ENCODE measurements at regions of chr4 and their contacts with region 1.

Region 1: GRCh38 chr4:45971108-45971507 is 152.7 kb downstream of the GABRG1 start:
- DNase-seq: peak; percentile 82
- H3K4me3 Mint-ChIP-seq: no peak overlapping the region
- H3K27ac Mint-ChIP-seq: peak overlapping the region; percentile 37
- H3K4me1 Mint-ChIP-seq: no peaks in the 10 kb centered on the region
- H3K27me3 Mint-ChIP-seq: no peaks in the 10 kb centered on the region
- CTCF ChIP-seq: peak; percentile 37

Region 2: GRCh38 chr4:44927399-44928380 is 1043.4 kb before region 1 on chr4:
- CTCF ChIA-PET with region 1: interaction called, 12 read pairs
- POLR2A ChIA-PET with region 1: no interaction called
- intact Hi-C with region 1: loop called (anchors 1 kb)
- DNase-seq: peak; percentile 66
- H3K4me3 Mint-ChIP-seq: no peak overlapping the region
- H3K27ac Mint-ChIP-seq: no peak overlapping the region
- H3K4me1 Mint-ChIP-seq: no peaks in the 10 kb centered on the region
- H3K27me3 Mint-ChIP-seq: no peaks in the 10 kb centered on the region
- CTCF ChIP-seq: peak; percentile 60

Region 3: GRCh38 chr4:45453258-45453853 is 517.8 kb before region 1 on chr4:
- CTCF ChIA-PET with region 1: interaction called, 17 read pairs
- POLR2A ChIA-PET with region 1: no interaction called
- intact Hi-C with region 1: loop called (anchors 1 kb)
- DNase-seq: peak; percentile 72
- H3K4me3 Mint-ChIP-seq: no peak overlapping the region
- H3K27ac Mint-ChIP-seq: no peak overlapping the region
- H3K4me1 Mint-ChIP-seq: no peaks in the 10 kb centered on the region
- H3K27me3 Mint-ChIP-seq: no peaks in the 10 kb centered on the region
- CTCF ChIP-seq: peak; percentile 59

Region 4: DNA sequence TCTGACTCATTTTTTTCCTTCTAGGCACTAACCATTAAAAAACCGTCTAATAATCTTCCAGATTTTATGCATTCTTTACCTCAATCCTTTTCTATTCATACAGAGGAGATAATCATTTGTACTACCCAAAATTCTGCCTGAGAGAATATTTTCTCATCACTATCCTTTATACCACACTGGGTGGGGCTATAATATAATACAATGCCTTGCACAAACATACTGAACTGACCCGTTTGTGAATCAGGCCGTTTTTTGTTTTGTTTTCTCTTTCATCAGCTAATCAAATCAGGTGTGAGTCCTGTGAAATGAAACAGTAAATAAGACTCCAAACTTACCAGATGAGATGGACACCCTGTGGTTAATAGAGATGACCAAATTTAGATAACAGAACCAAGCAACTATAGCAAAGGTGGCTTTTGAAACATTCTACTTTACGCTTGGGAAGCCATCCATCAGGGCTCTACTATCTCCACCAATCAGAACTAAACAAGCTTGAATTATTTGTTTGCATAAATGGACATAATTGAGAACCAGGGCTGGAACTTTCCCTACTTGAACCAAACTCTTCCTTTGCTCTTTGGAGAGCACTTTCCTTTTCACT is 420.2 kb before region 1 on chr4:
- CTCF ChIA-PET with region 1: interaction called, 13 read pairs
- POLR2A ChIA-PET with region 1: interaction called, 4 read pairs
- intact Hi-C with region 1: loop called (anchors 1 kb)
- DNase-seq: peak; percentile 32
- H3K4me3 Mint-ChIP-seq: no peak overlapping the region
- H3K27ac Mint-ChIP-seq: peak overlapping the region; percentile 20
- H3K4me1 Mint-ChIP-seq: peaks cover 4% of the 10 kb centered on the region
- H3K27me3 Mint-ChIP-seq: no peaks in the 10 kb centered on the region
- CTCF ChIP-seq: peak; percentile 32

Region 5: GRCh38 chr4:45693746-45694145 is 277.4 kb before region 1 on chr4:
- CTCF ChIA-PET with region 1: interaction called, 6 read pairs
- POLR2A ChIA-PET with region 1: no interaction called
- intact Hi-C with region 1: loop called (anchors 2 kb)
- DNase-seq: peak; percentile 76
- H3K4me3 Mint-ChIP-seq: peak overlapping the region; percentile 26
- H3K27ac Mint-ChIP-seq: peak overlapping the region; percentile 86
- H3K4me1 Mint-ChIP-seq: peaks cover 7% of the 10 kb centered on the region
- H3K27me3 Mint-ChIP-seq: no peaks in the 10 kb centered on the region
- CTCF ChIP-seq: no peak

Region 6: GRCh38 chr4:45776146-45776545 is 195.0 kb before region 1 on chr4:
- CTCF ChIA-PET with region 1: no interaction called
- POLR2A ChIA-PET with region 1: no interaction called
- intact Hi-C with region 1: no loop called
- DNase-seq: peak; percentile 68
- H3K4me3 Mint-ChIP-seq: no peak overlapping the region
- H3K27ac Mint-ChIP-seq: no peak overlapping the region
- H3K4me1 Mint-ChIP-seq: peaks cover 6% of the 10 kb centered on the region
- H3K27me3 Mint-ChIP-seq: no peaks in the 10 kb centered on the region
- CTCF ChIP-seq: no peak

Region 7: GRCh38 chr4:45985038-45985437 is 13.9 kb after region 1 on chr4:
- CTCF ChIA-PET with region 1: interaction called, 19 read pairs
- POLR2A ChIA-PET with region 1: no interaction called
- intact Hi-C with region 1: no loop called
- DNase-seq: no peak
- H3K4me3 Mint-ChIP-seq: no peak overlapping the region
- H3K27ac Mint-ChIP-seq: no peak overlapping the region
- H3K4me1 Mint-ChIP-seq: peaks cover 6% of the 10 kb centered on the region
- H3K27me3 Mint-ChIP-seq: no peaks in the 10 kb centered on the region
- CTCF ChIP-seq: no peak

Region 8: DNA sequence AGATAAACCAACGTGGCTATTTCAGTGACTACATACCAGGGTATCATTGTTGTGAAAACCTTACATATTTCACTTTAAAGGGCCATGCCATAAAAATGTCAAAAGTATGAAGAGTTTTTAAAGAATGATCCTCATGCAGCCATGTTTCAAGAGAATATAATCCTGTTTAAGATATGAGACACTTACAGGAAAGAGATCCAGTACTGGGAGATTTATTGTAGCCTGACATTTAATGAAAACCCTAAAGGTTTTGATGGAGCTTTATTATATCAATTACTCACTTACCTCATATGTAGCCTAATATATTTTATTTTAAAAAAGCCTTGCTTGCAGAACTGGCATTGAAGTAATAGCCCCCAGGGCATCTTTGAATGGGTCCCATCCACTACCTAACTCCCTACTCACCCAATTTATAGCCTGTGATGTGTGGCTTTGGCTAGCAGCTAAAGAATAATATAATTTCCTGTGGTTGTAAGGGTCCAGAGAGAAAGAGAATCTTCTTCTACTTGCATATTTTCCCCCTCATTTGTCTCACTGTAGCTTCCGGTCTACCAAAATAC is 160.5 kb after region 1 on chr4:
- CTCF ChIA-PET with region 1: no interaction called
- POLR2A ChIA-PET with region 1: no interaction called
- intact Hi-C with region 1: no loop called
- DNase-seq: no peak
- H3K4me3 Mint-ChIP-seq: no peak overlapping the region
- H3K27ac Mint-ChIP-seq: no peak overlapping the region
- H3K4me1 Mint-ChIP-seq: no peaks in the 10 kb centered on the region
- H3K27me3 Mint-ChIP-seq: no peaks in the 10 kb centered on the region
- CTCF ChIP-seq: no peak

Region 9: GRCh38 chr4:46270986-46271596 is 300.0 kb after region 1 on chr4:
- CTCF ChIA-PET with region 1: interaction called, 11 read pairs
- POLR2A ChIA-PET with region 1: no interaction called
- intact Hi-C with region 1: loop called (anchors 5 kb)
- DNase-seq: peak; percentile 59
- H3K4me3 Mint-ChIP-seq: no peak overlapping the region
- H3K27ac Mint-ChIP-seq: no peak overlapping the region
- H3K4me1 Mint-ChIP-seq: no peaks in the 10 kb centered on the region
- H3K27me3 Mint-ChIP-seq: no peaks in the 10 kb centered on the region
- CTCF ChIP-seq: peak; percentile 58